Common myeloid progenitor, CD34-positive (primary cell): ENCODE measurements at regions of chr3 and their contacts with region 1.

Region 1: GRCh38 chr3:132268956-132269355 is 48.3 kb upstream of the ACP3 start:
- DNase-seq: peak; percentile 30 to 61 (median 55)
- H3K4me3 ChIP-seq: no peak overlapping the region
- H3K27ac ChIP-seq: no peak overlapping the region
- H3K4me1 ChIP-seq: no peaks in the 10 kb centered on the region
- H3K27me3 ChIP-seq: no peaks in the 10 kb centered on the region

Region 2: GRCh38 chr3:132180337-132180791 is 88.6 kb before region 1 on chr3:
- CTCF ChIA-PET with region 1: no interaction called
- POLR2A ChIA-PET with region 1: no interaction called
- DNase-seq: peak; percentile 82 to 93 (median 89)
- H3K4me3 ChIP-seq: peak overlapping the region in 1 of 7 experiments; percentile 34
- H3K27ac ChIP-seq: no peak overlapping the region
- H3K4me1 ChIP-seq: peaks cover 0 to 14% (median 5%) of the 10 kb centered on the region in 4 experiments
- H3K27me3 ChIP-seq: peaks cover 0 to 6% (median 0%) of the 10 kb centered on the region in 5 experiments

Region 3: DNA sequence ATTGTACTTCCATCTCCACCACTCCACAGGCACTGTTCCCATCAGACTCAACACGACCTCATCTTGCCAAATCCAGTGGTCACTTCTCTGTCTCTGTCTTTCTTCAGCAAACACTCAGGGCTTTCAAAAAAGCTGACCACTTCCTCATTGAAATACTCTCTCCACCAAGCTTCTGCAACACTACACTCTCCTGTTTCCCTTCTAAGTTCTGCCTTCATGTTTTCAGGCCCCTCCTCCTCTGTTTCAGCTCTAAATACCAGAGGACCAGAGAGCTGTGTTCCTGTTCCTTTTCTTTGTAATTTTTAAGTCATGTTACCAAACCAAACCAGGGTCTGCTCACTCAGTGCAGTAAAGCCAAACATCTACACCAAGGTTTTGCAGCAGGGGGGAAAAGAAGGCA is 14.5 kb after region 1 on chr3:
- CTCF ChIA-PET with region 1: interaction called, 21 read pairs
- POLR2A ChIA-PET with region 1: no interaction called
- DNase-seq: peak in 2 of 3 donors; percentile 66 to 69
- H3K4me3 ChIP-seq: no peak overlapping the region
- H3K27ac ChIP-seq: no peak overlapping the region
- H3K4me1 ChIP-seq: peaks cover 0 to 18% (median 4%) of the 10 kb centered on the region in 4 experiments
- H3K27me3 ChIP-seq: no peaks in the 10 kb centered on the region

Region 4: GRCh38 chr3:132332508-132332907 is 63.6 kb after region 1 on chr3:
- CTCF ChIA-PET with region 1: no interaction called
- POLR2A ChIA-PET with region 1: no interaction called
- DNase-seq: no peak
- H3K4me3 ChIP-seq: no peak overlapping the region
- H3K27ac ChIP-seq: no peak overlapping the region
- H3K4me1 ChIP-seq: no peaks in the 10 kb centered on the region
- H3K27me3 ChIP-seq: no peaks in the 10 kb centered on the region

Region 5: GRCh38 chr3:132380920-132381319 is 112.0 kb after region 1 on chr3:
- CTCF ChIA-PET with region 1: no interaction called
- POLR2A ChIA-PET with region 1: no interaction called
- DNase-seq: no peak
- H3K4me3 ChIP-seq: no peak overlapping the region
- H3K27ac ChIP-seq: no peak overlapping the region
- H3K4me1 ChIP-seq: no peaks in the 10 kb centered on the region
- H3K27me3 ChIP-seq: no peaks in the 10 kb centered on the region

Region 6: DNA sequence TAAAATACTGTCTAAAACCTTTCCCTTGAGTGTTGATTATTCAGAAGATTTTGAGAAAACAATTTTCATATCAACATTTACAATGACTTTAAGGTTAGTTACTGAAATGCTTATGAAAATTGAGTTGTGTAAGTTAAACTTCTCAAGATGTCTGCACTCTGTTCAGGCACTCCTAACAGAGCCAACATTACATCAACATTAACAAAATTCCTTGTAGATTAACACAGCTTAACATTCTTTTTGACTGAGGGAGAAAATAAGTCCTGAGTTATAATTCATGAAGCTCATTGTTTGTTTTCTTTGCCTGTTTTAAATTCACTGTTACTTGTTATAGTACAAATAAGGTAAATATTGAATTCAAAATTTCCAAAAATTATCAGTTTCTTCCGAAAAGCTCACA is 337.1 kb after region 1 on chr3:
- CTCF ChIA-PET with region 1: no interaction called
- POLR2A ChIA-PET with region 1: no interaction called
- DNase-seq: no peak
- H3K4me3 ChIP-seq: no peak overlapping the region
- H3K27ac ChIP-seq: no peak overlapping the region
- H3K4me1 ChIP-seq: no peaks in the 10 kb centered on the region
- H3K27me3 ChIP-seq: no peaks in the 10 kb centered on the region